ENCODE measurements at regions of chr16 and their contacts with region 1.

Region 1: GRCh38 chr16:71610936-71611871 is 14.8 kb upstream of the MARVELD3 start:
- DNase-seq: peak; percentile 76 to 84
- ATAC-seq: peak; percentile 97
- H3K4me3 ChIP-seq: peak overlapping the region; percentile 3; the same call in 1 of the 3 replicates
- H3K27ac ChIP-seq: no peak overlapping the region; a peak in 1 of 6 replicates
- H3K4me1 ChIP-seq: peaks cover 9% of the 10 kb centered on the region; the same call in 2 of the 3 replicates
- CTCF ChIP-seq: peak; percentile 94
- EP300 ChIP-seq: no peak
- POLR2A ChIP-seq: no peak
- RAD21 ChIP-seq: peak; percentile 91 to 95

Region 2: DNA sequence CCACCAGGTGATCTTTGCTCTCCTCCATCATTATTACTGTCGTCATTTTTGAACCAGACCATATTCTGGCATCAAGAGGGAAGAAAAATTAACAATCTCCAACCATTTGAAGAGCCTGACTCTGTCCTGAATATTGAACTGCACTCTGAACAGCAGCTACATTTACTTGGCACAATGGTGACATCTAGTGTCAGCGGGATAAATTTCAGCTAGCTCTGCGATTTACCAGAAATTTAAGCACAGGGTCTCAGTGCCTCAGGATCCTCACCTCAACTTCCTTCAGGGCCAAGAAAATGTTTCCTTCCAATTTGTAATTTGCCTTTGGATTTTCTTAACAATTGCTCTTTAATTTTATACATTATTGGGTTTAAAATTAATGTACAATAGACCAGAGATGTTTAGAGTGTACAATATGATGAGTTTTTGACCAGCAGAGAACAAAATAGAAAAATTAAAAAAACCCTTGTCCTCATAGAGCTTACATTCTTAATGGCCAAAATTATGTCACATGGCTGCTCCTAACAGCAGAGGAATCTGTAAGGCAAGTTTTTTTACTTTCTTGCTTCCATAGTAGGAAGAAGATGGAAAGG is 111.3 kb before region 1 on chr16:
- CTCF ChIA-PET with region 1: interaction called, 60 read pairs
- POLR2A ChIA-PET with region 1: no interaction called
- DNase-seq: peak; percentile 65 to 67
- ATAC-seq: peak; percentile 75 to 90
- H3K4me3 ChIP-seq: no peak overlapping the region
- H3K27ac ChIP-seq: no peak overlapping the region
- H3K4me1 ChIP-seq: 0 out of 3 replicates have a peak, but pooled peaks cover under 1% of the 10 kb centered on the region
- CTCF ChIP-seq: peak; percentile 84
- EP300 ChIP-seq: no peak
- POLR2A ChIP-seq: no peak
- RAD21 ChIP-seq: peak; percentile 82 to 88

Region 3: GRCh38 chr16:71564155-71564967 is 46.8 kb before region 1 on chr16:
- CTCF ChIA-PET with region 1: interaction called, 91 read pairs
- POLR2A ChIA-PET with region 1: interaction called, 22 read pairs
- DNase-seq: no peak
- ATAC-seq: peak; percentile 9 to 30
- H3K4me3 ChIP-seq: peak overlapping the region; percentile 56
- H3K27ac ChIP-seq: peak overlapping the region; percentile 75 to 89
- H3K4me1 ChIP-seq: peaks cover 12% of the 10 kb centered on the region
- CTCF ChIP-seq: no peak
- EP300 ChIP-seq: no peak
- POLR2A ChIP-seq: no peak
- RAD21 ChIP-seq: no peak

Region 4: GRCh38 chr16:71585318-71585703 is 25.9 kb before region 1 on chr16:
- CTCF ChIA-PET with region 1: interaction called, 17 read pairs
- POLR2A ChIA-PET with region 1: no interaction called
- DNase-seq: peak in 1 of 2 experiments; percentile 12
- ATAC-seq: peak in 1 of 2 experiments; percentile 35; a peak in 1 of 6 replicates
- H3K4me3 ChIP-seq: no peak overlapping the region
- H3K27ac ChIP-seq: peak overlapping the region; percentile 12 to 41; a peak in 1 of 6 replicates
- H3K4me1 ChIP-seq: peaks cover 14% of the 10 kb centered on the region
- CTCF ChIP-seq: no peak
- EP300 ChIP-seq: no peak
- POLR2A ChIP-seq: no peak
- RAD21 ChIP-seq: no peak

Region 5: GRCh38 chr16:71600822-71601221 is 10.4 kb before region 1 on chr16:
- CTCF ChIA-PET with region 1: interaction called, 30 read pairs
- POLR2A ChIA-PET with region 1: interaction called, 7 read pairs
- DNase-seq: no peak
- ATAC-seq: peak; percentile 39 to 62; a peak in 5 of 6 replicates
- H3K4me3 ChIP-seq: no peak overlapping the region
- H3K27ac ChIP-seq: no peak overlapping the region
- H3K4me1 ChIP-seq: no peaks in the 10 kb centered on the region
- CTCF ChIP-seq: no peak
- EP300 ChIP-seq: no peak
- POLR2A ChIP-seq: no peak
- RAD21 ChIP-seq: no peak

Region 6: DNA sequence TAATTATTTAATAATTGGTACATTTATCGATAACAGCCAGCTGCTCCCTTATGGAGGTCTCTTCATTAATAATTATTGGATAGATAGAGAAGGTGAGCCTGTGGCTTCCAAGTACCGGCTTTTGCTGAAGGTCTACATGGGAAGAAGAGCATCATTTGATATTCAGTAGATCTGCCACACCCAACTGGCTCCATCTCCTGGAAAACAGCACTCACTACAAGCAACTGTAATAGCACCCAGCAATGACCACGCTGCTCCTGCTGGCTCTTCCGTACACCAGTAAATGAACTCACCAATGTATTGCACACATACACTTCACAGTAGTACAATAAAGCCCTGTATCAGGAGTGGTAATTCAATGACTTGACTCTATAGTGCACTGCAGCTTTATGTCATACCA is 34.2 kb after region 1 on chr16:
- CTCF ChIA-PET with region 1: interaction called, 20 read pairs
- POLR2A ChIA-PET with region 1: no interaction called
- DNase-seq: peak; percentile 63 to 70
- ATAC-seq: peak; percentile 90 to 91
- H3K4me3 ChIP-seq: no peak overlapping the region
- H3K27ac ChIP-seq: no peak overlapping the region
- H3K4me1 ChIP-seq: no peaks in the 10 kb centered on the region
- CTCF ChIP-seq: peak; percentile 39
- EP300 ChIP-seq: no peak
- POLR2A ChIP-seq: no peak
- RAD21 ChIP-seq: peak; percentile 18 to 44; a peak in 2 of 5 replicates

Region 7: DNA sequence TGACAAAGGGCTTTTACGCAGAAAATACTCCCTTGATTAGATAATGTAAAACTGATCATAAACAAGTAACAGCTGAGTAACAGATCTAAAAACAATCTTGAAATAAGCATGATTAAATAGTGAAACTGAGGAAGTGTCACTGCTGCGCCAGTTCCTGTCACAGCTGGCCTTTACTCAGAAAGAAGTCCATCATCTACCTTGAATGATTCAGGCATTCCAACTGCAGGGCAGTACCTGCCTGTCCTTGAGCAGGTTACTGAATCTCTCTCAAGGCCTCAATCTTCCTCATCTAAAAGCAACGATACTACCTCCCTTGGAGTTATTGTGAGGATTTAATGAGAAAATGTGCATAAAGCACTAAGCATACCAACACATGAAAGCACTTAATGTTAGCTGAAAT is 100.6 kb after region 1 on chr16:
- CTCF ChIA-PET with region 1: no interaction called
- POLR2A ChIA-PET with region 1: no interaction called
- DNase-seq: no peak
- ATAC-seq: no peak
- H3K4me3 ChIP-seq: no peak overlapping the region
- H3K27ac ChIP-seq: no peak overlapping the region
- H3K4me1 ChIP-seq: peaks cover 40% of the 10 kb centered on the region
- CTCF ChIP-seq: no peak
- EP300 ChIP-seq: no peak
- POLR2A ChIP-seq: no peak
- RAD21 ChIP-seq: no peak